Dorsolateral prefrontal cortex (tissue), 120 donors: ENCODE measurements at regions of chr3 and their contacts with region 1.

Region 1: GRCh38 chr3:23202921-23203707 is at the start of gene UBE2E2:
- DNase-seq: peak; percentile 41 to 83 (median 62)
- H3K4me3 ChIP-seq: peak within 1 kb of the TSS; percentile 66 to 99 (median 87)
- H3K27ac ChIP-seq: peak within 1 kb of the TSS; percentile 37 to 96 (median 88)
- H3K27me3 ChIP-seq: no peaks in the 10 kb centered on the region
- CTCF ChIP-seq: peak in 2 of 56 donors; percentile 13 to 34
- total RNA-seq, gene UBE2E2: 50.5 to 141 (median 96.9) TPM

Region 2: GRCh38 chr3:23079932-23080373 is 123.2 kb before region 1 on chr3:
- intact Hi-C with region 1: no loop called
- DNase-seq: no peak
- H3K4me3 ChIP-seq: peak overlapping the region in 17 of 59 donors; percentile 1 to 42 (median 13)
- H3K27ac ChIP-seq: no peak overlapping the region
- H3K27me3 ChIP-seq: no peaks in the 10 kb centered on the region
- CTCF ChIP-seq: no peak

Region 3: GRCh38 chr3:23239211-23240068 is 36.3 kb after region 1 on chr3:
- intact Hi-C with region 1: loop called in 1 of 2 experiments (anchors 5 kb)
- DNase-seq: no peak
- H3K4me3 ChIP-seq: peak overlapping the region in 1 of 59 donors; percentile 5
- H3K27ac ChIP-seq: peak overlapping the region in 55 of 59 donors; percentile 6 to 94 (median 80)
- H3K27me3 ChIP-seq: no peaks in the 10 kb centered on the region
- CTCF ChIP-seq: no peak

Region 4: DNA sequence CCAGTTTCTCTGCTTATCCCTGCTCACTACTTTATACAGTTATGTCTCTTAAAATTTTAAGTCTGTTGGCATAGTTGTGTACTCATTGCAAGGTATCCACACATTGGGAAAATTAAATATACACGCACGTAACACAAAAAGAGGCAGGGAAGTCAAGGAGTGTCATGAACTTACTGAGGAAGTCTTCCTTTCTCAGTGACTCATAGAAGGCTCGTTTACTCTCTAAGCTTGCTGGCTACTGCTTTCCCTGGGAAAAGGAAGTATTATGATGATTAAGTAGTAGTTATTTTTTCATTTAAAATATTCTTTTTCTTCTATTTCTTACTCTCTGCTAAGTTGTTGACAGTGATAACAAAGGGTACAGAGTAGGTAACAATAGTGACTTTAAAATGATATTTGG is 287.3 kb after region 1 on chr3:
- intact Hi-C with region 1: no loop called
- DNase-seq: no peak
- H3K4me3 ChIP-seq: no peak overlapping the region
- H3K27ac ChIP-seq: no peak overlapping the region
- H3K27me3 ChIP-seq: no peaks in the 10 kb centered on the region
- CTCF ChIP-seq: no peak

Region 5: DNA sequence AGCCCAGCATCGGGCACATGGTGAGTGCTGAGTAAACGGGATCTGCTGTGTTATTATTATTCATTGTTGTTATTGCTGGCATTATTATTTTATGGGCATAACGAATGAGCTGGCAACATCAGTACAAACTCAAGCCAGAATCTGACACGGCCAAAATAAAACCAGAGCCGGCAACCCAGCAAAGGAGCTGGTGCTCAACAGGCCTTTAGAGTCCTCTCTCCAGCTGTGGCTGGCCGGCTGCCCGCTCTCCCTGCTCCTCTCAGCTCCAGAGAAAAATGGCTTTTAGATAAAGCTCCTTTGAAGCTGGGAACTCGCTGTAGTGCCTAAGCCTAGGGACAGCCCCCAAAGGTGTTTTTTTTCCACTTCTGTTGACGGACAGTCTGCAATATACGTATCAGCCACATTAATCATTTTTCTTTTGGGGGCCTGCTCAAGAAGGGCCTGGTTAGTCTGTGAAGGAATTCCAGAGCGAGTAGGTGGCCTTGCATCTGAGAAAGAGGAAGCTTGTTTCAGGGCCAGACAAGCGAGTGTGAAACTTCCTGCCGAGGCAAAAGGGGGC is 408.7 kb after region 1 on chr3:
- intact Hi-C with region 1: loop called in 1 of 2 experiments (anchors 10 kb)
- DNase-seq: peak; percentile 24 to 90 (median 84)
- H3K4me3 ChIP-seq: peak overlapping the region in 52 of 59 donors; percentile 8 to 61 (median 34)
- H3K27ac ChIP-seq: peak overlapping the region in 54 of 59 donors; percentile 1 to 87 (median 66)
- H3K27me3 ChIP-seq: no peaks in the 10 kb centered on the region
- CTCF ChIP-seq: peak in 2 of 56 donors; percentile 12 to 16